Endothelial cell of umbilical vein (primary cell): ENCODE measurements at regions of chr9 and their contacts with region 1.

Region 1: DNA sequence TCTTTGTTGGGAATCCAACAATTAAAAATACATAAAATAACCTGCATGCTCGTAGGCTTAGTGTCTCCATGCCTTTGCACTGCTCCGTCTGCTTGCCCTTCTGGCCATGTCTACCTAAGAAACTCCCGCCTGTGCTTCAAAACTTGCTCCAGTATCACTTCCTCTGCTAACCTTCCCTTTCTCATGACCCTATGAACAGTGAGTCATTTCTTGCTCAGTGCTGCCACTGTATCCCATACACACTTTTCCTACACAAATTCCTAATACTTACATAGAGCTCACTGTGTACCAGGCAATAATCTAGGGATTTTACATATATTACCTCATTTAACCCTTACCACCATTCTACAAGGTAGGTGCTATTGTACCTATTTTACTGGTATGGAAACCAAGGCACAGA is 33.5 kb downstream of the TMEM245 start:
- DNase-seq: peak; percentile 65
- H3K4me3 ChIP-seq: no peak overlapping the region
- H3K27ac ChIP-seq: no peak overlapping the region
- H3K4me1 ChIP-seq: no peaks in the 10 kb centered on the region
- H3K27me3 ChIP-seq: no peaks in the 10 kb centered on the region
- CTCF ChIP-seq: no peak
- POLR2A ChIP-seq: no peak

Region 2: DNA sequence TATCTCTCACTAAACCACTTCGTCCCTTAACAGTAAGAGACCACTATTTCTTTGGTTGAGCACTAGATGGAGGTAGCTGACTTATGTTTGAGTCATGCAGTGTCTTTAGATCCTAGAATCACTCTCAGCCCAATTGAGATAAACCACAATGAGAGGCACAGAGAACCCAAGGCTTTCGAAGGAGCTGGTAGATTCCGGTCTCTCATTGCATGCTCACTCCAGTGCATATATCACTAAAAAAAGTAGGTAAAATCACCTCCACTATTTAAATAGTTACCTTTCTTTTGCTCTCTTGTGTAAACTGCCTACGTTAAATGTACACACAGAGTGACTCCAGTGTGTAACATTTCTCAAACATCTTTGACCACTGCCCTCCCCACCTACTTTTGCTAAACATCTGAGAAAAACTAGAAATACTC is 196.6 kb before region 1 on chr9:
- CTCF ChIA-PET with region 1: no interaction called
- POLR2A ChIA-PET with region 1: no interaction called
- dilution Hi-C with region 1: no loop called
- intact Hi-C with region 1: no loop called
- DNase-seq: peak; percentile 32
- H3K4me3 ChIP-seq: no peak overlapping the region
- H3K27ac ChIP-seq: no peak overlapping the region
- H3K4me1 ChIP-seq: peaks cover 3% of the 10 kb centered on the region
- H3K27me3 ChIP-seq: no peaks in the 10 kb centered on the region
- CTCF ChIP-seq: peak in 1 of 2 donors; percentile 21
- POLR2A ChIP-seq: no peak

Region 3: DNA sequence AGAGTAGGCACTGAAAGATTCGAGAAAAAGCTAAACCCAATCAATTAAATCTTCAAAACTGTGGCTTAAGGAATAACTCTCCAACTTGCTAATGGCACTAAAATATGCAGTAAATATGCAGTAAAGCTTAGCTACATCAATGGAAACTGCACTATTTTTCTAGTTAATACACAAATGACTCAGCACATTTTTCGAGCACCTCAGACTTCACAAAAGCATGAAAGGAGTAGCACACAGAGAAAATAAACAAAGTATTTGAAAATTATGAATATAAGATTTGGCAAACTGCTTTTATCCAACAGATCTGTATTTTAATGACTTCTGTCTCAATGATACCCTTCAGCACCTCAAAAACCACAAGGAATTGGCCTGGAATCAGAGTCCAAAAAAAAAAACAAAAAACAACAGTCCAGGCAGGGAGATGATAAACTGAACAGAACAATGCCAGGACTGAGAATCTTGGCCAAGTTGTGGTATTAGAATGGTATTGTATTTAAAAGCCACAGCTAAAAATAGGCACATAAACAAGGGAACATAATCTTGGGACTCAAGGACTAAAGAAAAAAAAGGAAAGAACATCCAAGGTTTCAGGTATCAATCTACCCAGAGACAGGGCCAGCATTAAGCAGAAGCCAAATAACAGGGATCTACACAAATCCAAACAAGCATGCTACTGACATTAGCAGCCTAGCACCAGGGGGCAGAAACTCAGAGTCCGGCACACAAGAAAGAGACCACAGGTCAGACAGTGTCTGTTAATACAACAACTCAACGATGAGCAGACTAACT is 12.1 kb after region 1 on chr9:
- CTCF ChIA-PET with region 1: interaction called, 13 read pairs
- POLR2A ChIA-PET with region 1: no interaction called
- dilution Hi-C with region 1: no loop called
- intact Hi-C with region 1: no loop called
- DNase-seq: peak; percentile 97
- H3K4me3 ChIP-seq: peak overlapping the region in 1 of 3 experiments; percentile 21
- H3K27ac ChIP-seq: peak overlapping the region; percentile 52
- H3K4me1 ChIP-seq: peaks cover 54% of the 10 kb centered on the region
- H3K27me3 ChIP-seq: no peaks in the 10 kb centered on the region
- CTCF ChIP-seq: peak; percentile 19 to 33
- POLR2A ChIP-seq: no peak